Left cardiac atrium (tissue), 4 donors: ENCODE measurements at regions of chr22 and their contacts with region 1.

Region 1: GRCh38 chr22:22463855-22464540 is 44.5 kb downstream of the ZNF280B start:
- DNase-seq: peak; percentile 31
- ATAC-seq: peak; percentile 47 to 71

Region 2: GRCh38 chr22:22397277-22397870 is 66.6 kb before region 1 on chr22:
- intact Hi-C with region 1: no loop called
- DNase-seq: peak; percentile 41
- ATAC-seq: peak in 1 of 2 donors; percentile 92

Region 3: GRCh38 chr22:22687638-22688500 is 223.9 kb after region 1 on chr22:
- intact Hi-C with region 1: loop called in 1 of 2 experiments (anchors 10 kb)
- DNase-seq: no peak
- ATAC-seq: peak; percentile 68 to 78

Region 4: GRCh38 chr22:23128269-23129108 is 664.5 kb after region 1 on chr22:
- intact Hi-C with region 1: loop called in 1 of 2 experiments (anchors 10 kb)
- DNase-seq: peak; percentile 73
- ATAC-seq: peak; percentile 90